ENCODE measurements at regions of chr5 and their contacts with region 1.

Region 1: GRCh38 chr5:42950440-42951292 is 89.5 kb downstream of the ANXA2R start:
- DNase-seq: peak; percentile 97 to 100
- H3K4me3 ChIP-seq: peak overlapping the region; percentile 55
- H3K27ac ChIP-seq: peak overlapping the region; percentile 96
- H3K4me1 ChIP-seq: peaks cover 28% of the 10 kb centered on the region
- H3K27me3 ChIP-seq: no peaks in the 10 kb centered on the region
- CTCF ChIP-seq: no peak

Region 2: GRCh38 chr5:42930934-42931333 is 19.7 kb before region 1 on chr5:
- CTCF ChIA-PET with region 1: no interaction called
- POLR2A ChIA-PET with region 1: no interaction called
- intact Hi-C with region 1: loop called (anchors 1 kb)
- DNase-seq: peak in 1 of 2 experiments; percentile 61
- H3K4me3 ChIP-seq: peak overlapping the region; percentile 37; the same call in 1 of the 2 replicates
- H3K27ac ChIP-seq: no peak overlapping the region
- H3K4me1 ChIP-seq: peaks cover 24% of the 10 kb centered on the region
- H3K27me3 ChIP-seq: no peaks in the 10 kb centered on the region
- CTCF ChIP-seq: no peak

Region 3: GRCh38 chr5:43000111-43000845 is 49.6 kb after region 1 on chr5:
- CTCF ChIA-PET with region 1: interaction called, 6 read pairs
- POLR2A ChIA-PET with region 1: no interaction called
- intact Hi-C with region 1: loop called (anchors 2 kb)
- DNase-seq: peak; percentile 69 to 81
- H3K4me3 ChIP-seq: peak overlapping the region; percentile 55
- H3K27ac ChIP-seq: peak overlapping the region; percentile 59
- H3K4me1 ChIP-seq: peaks cover 29% of the 10 kb centered on the region
- H3K27me3 ChIP-seq: no peaks in the 10 kb centered on the region
- CTCF ChIP-seq: no peak

Region 4: GRCh38 chr5:43040287-43041098 is 89.8 kb after region 1 on chr5 and contains the start of gene ANXA2R:
- CTCF ChIA-PET with region 1: interaction called, 8 read pairs
- POLR2A ChIA-PET with region 1: interaction called, 5 read pairs
- intact Hi-C with region 1: loop called (anchors 1 kb)
- DNase-seq: peak; percentile 94 to 97
- H3K4me3 ChIP-seq: peak within 1 kb of the TSS; percentile 76
- H3K27ac ChIP-seq: peak within 1 kb of the TSS; percentile 60
- H3K4me1 ChIP-seq: peaks cover 1% of the 10 kb centered on the region; the same call in 1 of the 2 replicates
- H3K27me3 ChIP-seq: no peaks in the 10 kb centered on the region
- CTCF ChIP-seq: peak; percentile 99
- total RNA-seq, gene ANXA2R: 3.6 and 6.3 TPM in 2 replicates

Region 5: DNA sequence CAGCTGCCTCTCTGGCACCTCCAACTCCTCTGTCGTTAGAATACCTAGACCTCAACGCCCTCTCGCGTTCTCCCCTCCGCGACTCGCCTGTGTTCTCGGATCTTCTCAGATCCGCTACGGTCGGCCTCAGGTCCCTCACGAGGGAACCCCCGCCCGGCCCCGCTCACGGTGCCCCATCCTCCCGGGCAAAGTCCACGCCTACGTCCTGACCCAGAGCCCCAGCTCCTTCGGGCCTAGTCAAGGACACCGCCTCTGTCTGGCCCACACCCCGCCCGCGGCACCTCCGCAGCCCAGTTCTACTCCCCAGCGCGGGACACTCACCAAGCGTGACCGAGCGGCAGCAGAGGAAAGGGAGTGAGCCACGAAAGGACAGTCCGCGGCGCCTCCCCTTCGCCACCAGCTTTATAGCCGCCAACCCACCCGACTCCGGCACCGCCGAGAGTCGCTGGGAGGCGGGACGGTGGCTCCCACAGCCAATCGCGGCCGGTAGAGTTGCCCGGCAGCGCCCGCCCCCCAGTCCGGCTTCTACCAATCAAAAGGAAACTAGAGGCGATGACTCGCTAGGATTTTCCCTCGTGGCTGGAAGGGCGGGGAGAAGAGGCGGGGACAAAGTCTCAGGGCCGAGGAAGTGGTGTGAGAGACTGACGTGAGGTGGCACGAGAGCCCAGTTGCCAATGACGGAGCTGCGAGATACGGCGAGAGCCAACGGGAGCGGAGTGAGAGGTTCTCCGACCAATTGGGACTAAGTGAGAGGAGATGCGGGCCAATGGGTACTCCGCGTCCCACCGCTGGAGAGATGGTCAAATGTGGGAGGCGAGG is 362.6 kb after region 1 on chr5 and contains the start of gene HMGCS1:
- CTCF ChIA-PET with region 1: interaction called, 3 read pairs
- POLR2A ChIA-PET with region 1: no interaction called
- intact Hi-C with region 1: loop called (anchors 1 kb)
- DNase-seq: peak; percentile 100
- H3K4me3 ChIP-seq: peak within 1 kb of the TSS; percentile 72
- H3K27ac ChIP-seq: peak within 1 kb of the TSS; percentile 73
- H3K4me1 ChIP-seq: peaks cover 66% of the 10 kb centered on the region
- H3K27me3 ChIP-seq: no peaks in the 10 kb centered on the region
- CTCF ChIP-seq: peak; percentile 24; the same call in 1 of the 2 replicates
- total RNA-seq, gene HMGCS1: 152 and 189 TPM in 2 replicates

Measured in PC-9 (cell line).